ENCODE measurements at regions of chr1 and their contacts with region 1.

Region 1: DNA sequence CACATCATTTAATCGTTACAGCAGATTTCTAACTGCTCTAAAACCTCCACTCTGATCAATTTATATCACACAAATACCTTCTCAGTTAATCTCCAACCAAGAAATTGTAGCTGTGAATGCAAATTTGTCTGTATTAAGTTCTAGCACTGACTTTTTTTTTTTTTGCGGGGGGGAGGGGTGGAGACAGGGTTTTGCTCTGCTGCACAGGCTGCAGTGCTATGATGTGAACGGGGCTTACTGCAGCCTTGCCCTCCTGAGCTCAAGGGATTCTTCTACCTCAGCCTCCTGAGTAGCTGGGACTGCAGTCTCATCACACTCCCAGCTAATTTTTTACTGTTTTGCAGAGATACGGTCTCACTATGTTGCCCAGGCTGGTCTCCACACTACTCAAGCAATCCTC is 163.6 kb downstream of the RERE start:
- DNase-seq: peak; percentile 41
- ATAC-seq: peak; percentile 69
- H3K4me3 ChIP-seq: no peak overlapping the region
- H3K4me3 Mint-ChIP-seq: peak overlapping the region; percentile 66
- H3K27ac ChIP-seq: no peak overlapping the region
- H3K27ac Mint-ChIP-seq: peak overlapping the region; percentile 75
- H3K4me1 ChIP-seq: peaks cover 43 to 44% of the 10 kb centered on the region in 2 donors
- H3K4me1 Mint-ChIP-seq: peaks cover 62% of the 10 kb centered on the region
- H3K27me3 ChIP-seq: no peaks in the 10 kb centered on the region
- H3K27me3 Mint-ChIP-seq: no peaks in the 10 kb centered on the region
- CTCF ChIP-seq: no peak

Region 2: GRCh38 chr1:8598060-8598724 is 55.7 kb before region 1 on chr1:
- CTCF ChIA-PET with region 1: interaction called, 5 read pairs
- POLR2A ChIA-PET with region 1: interaction called, 11 read pairs
- intact Hi-C with region 1: no loop called
- DNase-seq: no peak
- ATAC-seq: no peak
- H3K4me3 ChIP-seq: no peak overlapping the region
- H3K4me3 Mint-ChIP-seq: no peak overlapping the region
- H3K27ac ChIP-seq: no peak overlapping the region
- H3K27ac Mint-ChIP-seq: no peak overlapping the region
- H3K4me1 ChIP-seq: peaks cover 13 to 24% of the 10 kb centered on the region in 2 donors
- H3K4me1 Mint-ChIP-seq: peaks cover 24% of the 10 kb centered on the region
- H3K27me3 ChIP-seq: no peaks in the 10 kb centered on the region
- H3K27me3 Mint-ChIP-seq: no peaks in the 10 kb centered on the region
- CTCF ChIP-seq: no peak